ENCODE measurements at regions of chr1 and their contacts with region 1.

Region 1: DNA sequence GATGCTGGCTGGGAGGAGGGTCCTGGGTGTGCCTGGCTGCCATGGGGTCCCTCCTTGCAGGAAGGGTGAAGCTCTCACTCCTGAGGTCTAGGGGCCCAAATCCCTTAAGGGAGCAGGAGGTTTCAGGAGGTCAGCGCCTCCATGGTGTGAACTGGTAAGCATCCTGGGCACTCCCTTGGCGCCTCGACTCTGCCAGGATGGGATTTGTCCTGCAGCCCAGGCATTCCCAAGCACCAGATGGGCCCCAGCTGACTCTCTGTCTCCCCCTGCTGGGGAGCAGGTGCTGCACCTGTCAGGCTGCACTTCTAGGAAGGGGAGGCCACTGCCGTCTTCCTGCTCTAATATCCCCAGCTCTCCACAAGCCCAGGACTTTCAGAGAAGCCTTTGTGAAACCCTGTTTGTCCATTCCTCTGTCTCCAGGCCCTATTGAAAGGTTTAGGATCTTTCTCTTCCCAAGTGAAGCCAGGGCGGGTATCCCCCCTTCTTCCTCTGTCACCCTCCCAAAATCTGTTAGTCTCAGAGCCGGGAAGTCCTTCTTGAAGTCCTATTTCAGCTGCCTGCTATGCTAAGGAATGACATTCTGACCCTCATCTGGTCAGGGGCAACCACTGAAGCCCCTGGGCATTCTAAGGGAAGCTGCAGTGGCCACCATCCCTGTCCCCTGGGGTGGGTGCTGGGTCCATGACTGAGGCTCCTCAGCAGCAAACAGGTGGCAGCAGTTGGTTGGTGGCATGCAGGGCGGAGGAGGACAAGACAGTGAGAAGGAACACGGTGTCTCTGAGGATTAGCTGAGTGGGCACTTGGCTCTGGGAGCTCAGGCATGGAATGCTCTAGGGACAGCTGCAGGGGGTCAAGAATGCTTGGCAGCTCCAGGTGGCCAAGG is 3.3 kb downstream of the MYBPH start:
- DNase-seq: peak in 9 of 10 donors; percentile 52 to 96 (median 77)

Region 2: GRCh38 chr1:203117611-203118575 is 54.5 kb before region 1 on chr1:
- intact Hi-C with region 1: loop called (anchors 2 kb)
- DNase-seq: peak; percentile 66 to 97 (median 81)

Region 3: DNA sequence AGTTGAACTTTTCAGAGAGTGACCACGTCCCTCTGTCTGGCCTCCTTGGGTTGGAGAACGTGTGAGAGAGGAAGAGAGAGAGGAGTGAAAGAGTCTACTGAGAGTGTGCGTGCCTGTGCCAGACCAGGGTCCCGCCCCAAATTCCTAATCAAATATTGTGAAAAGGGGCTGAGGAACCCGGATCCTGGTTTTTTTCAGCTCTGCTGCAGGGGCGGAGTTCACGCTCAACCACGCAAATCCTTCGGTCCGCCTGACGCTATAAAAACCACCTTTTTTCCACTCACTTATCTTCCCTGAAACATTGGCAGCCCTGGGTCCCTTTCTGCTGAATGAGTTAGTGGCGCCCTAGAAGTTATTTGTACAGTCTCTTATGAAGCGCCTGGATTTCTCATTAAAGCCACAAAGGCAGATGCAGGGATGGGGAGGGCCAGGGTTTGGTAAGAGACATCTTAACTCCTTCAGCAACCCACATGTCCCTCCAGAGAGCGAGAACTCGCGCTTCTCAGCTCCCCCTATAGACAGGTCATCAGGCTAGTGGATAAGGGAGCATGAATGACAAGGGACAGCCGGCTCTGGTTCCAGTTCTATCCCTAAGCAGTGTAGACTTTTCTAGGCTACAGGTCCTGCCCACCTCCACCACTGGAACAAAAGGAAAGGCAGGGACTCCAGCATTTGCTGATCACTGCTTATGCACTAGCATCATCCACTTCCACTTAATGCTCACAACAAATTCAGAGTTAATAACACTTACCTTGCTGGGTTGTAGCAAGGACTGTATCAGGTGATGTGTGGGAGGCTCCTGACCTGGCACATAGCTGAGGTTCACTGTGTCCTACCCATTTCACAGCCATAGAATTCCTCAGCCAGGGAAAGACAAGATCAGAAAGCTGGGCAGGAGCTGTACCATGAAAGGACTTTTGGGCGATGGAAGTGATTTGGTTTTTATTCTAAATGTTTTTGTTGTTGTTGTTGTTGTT is 179.0 kb after region 1 on chr1 and contains the start of gene FMOD:
- intact Hi-C with region 1: no loop called
- DNase-seq: no peak

Measured in posterior cingulate gyrus (tissue), 11 donors.